Common myeloid progenitor, CD34-positive (primary cell): ENCODE measurements at regions of chr12 and their contacts with region 1.

Region 1: DNA sequence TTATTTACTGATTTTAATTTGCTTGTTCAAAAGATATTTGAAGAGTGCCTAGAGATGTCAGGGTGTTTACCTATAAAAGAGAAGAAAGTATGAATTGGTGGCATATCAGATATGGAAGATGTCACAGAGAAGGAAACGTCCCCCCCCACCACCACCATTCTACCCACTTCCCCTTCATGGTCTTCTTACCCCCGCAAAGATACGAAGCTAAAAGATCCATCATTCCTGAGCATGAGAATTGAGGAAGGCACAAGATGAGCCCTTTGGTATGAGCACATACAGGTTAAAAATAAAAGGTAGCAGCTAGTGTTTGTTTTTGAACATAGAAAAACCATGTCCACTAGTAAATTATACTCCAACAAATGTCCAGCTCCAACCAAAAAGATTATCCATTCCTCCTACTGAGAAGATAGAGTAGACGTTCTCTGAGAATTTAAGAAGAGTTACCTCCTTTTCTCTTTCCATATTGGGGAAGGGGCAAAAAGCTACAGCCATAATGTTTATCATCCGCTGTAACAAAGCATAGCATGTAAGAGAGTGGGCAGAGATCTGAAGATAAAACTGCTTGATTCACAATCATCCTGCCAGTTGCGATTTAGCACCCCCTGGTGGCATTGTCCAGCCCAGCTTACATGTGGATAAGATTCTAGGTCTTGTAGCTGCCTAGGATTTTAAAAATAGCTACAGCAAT is 29.1 kb downstream of the NFYB start:
- DNase-seq: peak; percentile 88 to 94 (median 91)
- H3K4me3 ChIP-seq: peak overlapping the region in 5 of 7 experiments; percentile 19 to 65 (median 50)
- H3K27ac ChIP-seq: no peak overlapping the region
- H3K4me1 ChIP-seq: peaks cover 3 to 8% (median 7%) of the 10 kb centered on the region in 4 experiments
- H3K27me3 ChIP-seq: no peaks in the 10 kb centered on the region

Region 2: DNA sequence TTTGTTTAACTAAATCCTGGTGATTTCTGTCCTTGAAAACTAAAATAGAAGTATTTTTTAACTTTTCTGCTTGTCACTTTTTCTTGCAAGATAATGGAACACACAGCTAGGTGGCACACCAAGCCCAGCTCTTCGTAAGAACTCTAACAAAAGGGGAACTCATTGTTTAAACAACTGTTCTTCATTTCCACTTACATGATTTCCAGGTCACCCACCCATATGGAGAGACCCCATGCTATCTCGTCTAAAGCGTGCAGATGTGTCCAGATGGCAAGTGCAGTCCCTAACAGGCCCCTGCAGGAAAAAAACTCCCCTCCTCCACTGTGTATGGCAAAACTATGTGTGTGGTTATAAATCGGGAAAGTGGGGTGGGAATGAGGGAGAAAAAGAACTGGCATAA is 224.6 kb before region 1 on chr12:
- CTCF ChIA-PET with region 1: interaction called, 22 read pairs
- POLR2A ChIA-PET with region 1: no interaction called
- DNase-seq: peak; percentile 81 to 91 (median 90)
- H3K4me3 ChIP-seq: peak overlapping the region in 1 of 7 experiments; percentile 17
- H3K27ac ChIP-seq: no peak overlapping the region
- H3K4me1 ChIP-seq: peaks cover 9 to 30% (median 20%) of the 10 kb centered on the region in 4 experiments
- H3K27me3 ChIP-seq: no peaks in the 10 kb centered on the region

Region 3: GRCh38 chr12:104057771-104058197 is 51.1 kb before region 1 on chr12:
- CTCF ChIA-PET with region 1: interaction called, 50 read pairs
- POLR2A ChIA-PET with region 1: no interaction called
- DNase-seq: peak; percentile 34 to 49 (median 46)
- H3K4me3 ChIP-seq: no peak overlapping the region
- H3K27ac ChIP-seq: no peak overlapping the region
- H3K4me1 ChIP-seq: peaks cover 0 to 6% (median 0%) of the 10 kb centered on the region in 4 experiments
- H3K27me3 ChIP-seq: peaks cover 0 to 13% (median 3%) of the 10 kb centered on the region in 5 experiments

Region 4: GRCh38 chr12:104064031-104064822 is 44.7 kb before region 1 on chr12 and contains the start of gene HCFC2:
- CTCF ChIA-PET with region 1: interaction called, 50 read pairs
- POLR2A ChIA-PET with region 1: no interaction called
- DNase-seq: peak; percentile 85 to 91 (median 89)
- H3K4me3 ChIP-seq: peak within 1 kb of the TSS; percentile 83 to 98 (median 89)
- H3K27ac ChIP-seq: peak within 1 kb of the TSS; percentile 25 to 74
- H3K4me1 ChIP-seq: peaks cover 3 to 29% (median 15%) of the 10 kb centered on the region in 4 experiments
- H3K27me3 ChIP-seq: peaks cover 0 to 7% (median 0%) of the 10 kb centered on the region in 5 experiments

Region 5: GRCh38 chr12:104097954-104098353 is 10.9 kb before region 1 on chr12:
- CTCF ChIA-PET with region 1: interaction called, 21 read pairs
- POLR2A ChIA-PET with region 1: no interaction called
- DNase-seq: no peak
- H3K4me3 ChIP-seq: no peak overlapping the region
- H3K27ac ChIP-seq: no peak overlapping the region
- H3K4me1 ChIP-seq: no peaks in the 10 kb centered on the region
- H3K27me3 ChIP-seq: no peaks in the 10 kb centered on the region

Region 6: GRCh38 chr12:104121001-104121400 is 12.1 kb after region 1 on chr12:
- CTCF ChIA-PET with region 1: interaction called, 17 read pairs
- POLR2A ChIA-PET with region 1: interaction called, 3 read pairs
- DNase-seq: no peak
- H3K4me3 ChIP-seq: no peak overlapping the region
- H3K27ac ChIP-seq: no peak overlapping the region
- H3K4me1 ChIP-seq: no peaks in the 10 kb centered on the region
- H3K27me3 ChIP-seq: no peaks in the 10 kb centered on the region

Region 7: GRCh38 chr12:104166465-104166864 is 57.6 kb after region 1 on chr12:
- CTCF ChIA-PET with region 1: no interaction called
- POLR2A ChIA-PET with region 1: no interaction called
- DNase-seq: no peak
- H3K4me3 ChIP-seq: no peak overlapping the region
- H3K27ac ChIP-seq: no peak overlapping the region
- H3K4me1 ChIP-seq: no peaks in the 10 kb centered on the region
- H3K27me3 ChIP-seq: no peaks in the 10 kb centered on the region